Sciatic nerve (tissue), 2 donors: ENCODE measurements at regions of chr4 and their contacts with region 1.

Region 1: DNA sequence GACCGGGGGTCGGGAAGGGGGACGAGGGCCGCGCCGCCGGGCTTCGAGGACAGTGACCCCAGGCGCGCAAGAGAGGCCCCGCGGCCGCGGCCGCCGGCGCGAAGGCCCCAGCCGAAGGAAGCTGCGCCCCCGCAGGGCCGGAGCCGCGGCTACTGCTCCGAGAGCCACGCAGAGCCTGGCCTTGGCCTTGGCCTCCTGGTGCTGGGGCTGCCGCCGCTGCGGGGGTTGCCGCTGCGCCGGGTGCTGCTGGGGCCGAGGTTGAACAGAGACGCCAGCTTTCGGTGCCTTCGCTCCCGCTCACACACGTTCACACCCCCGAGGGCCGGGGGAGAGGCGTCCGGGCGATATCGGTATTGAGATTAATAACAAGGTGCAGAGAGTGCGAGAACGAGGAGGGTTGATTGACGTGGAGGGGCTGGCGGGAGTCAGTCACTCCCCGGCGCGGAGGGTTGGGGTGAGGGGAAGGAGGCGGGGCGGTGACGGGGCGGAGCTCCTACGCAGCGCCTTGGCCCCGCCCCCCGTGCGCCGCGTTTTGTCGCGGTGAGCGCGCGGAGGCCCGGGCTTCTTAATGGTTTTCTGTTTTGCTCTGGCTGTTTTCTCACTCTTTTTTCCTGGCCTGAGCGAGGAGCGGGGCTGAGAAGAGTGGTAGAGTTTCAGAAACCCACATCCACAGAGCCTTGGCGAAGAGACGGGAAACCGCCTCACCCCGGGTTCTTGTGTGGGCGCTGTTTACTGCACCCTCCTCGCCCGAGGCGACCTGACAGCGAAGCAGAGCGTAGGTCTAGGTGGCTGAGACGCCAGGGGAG is 878 bp upstream of the CNOT6L start:
- DNase-seq: peak; percentile 97
- ATAC-seq: peak; percentile 97

Region 2: DNA sequence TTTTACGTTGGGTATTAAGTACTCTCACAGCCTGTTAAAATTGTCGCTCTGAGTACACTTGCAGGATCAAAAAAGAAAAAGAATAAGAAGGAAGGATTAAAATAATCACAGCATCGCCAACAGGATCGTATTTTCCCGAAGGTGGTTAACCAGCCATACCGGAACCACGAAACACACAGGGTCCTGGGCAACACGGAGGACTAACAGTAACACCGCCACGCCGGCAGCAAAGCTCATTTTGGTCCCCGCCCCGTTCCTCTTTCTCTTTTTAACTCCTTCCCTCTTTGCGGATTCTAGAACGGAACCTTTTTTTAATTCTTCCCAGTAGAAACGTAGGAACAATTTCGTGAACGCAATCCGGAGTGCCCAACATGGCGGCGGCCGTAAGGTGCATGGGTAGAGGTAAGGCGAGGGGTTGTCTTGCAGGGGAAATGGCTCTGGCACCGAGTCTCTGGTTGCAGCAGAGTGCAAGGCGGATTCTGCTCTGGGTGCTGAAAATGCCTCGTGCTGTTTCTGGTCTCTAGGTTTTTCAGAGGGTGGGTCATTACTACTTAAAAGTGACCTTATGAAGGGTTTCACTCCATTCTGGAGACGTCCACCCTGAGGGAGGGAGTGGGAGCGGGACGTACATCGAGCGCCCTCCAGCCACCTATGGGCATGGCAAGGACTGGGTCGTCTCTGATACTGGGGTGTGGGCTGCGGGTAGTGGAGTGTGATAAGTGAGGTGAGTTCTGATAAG is 42.6 kb after region 1 on chr4 and contains the start of gene MRPL1:
- intact Hi-C with region 1: loop called (anchors 5 kb)
- DNase-seq: peak; percentile 92
- ATAC-seq: peak; percentile 98
- total RNA-seq, gene MRPL1: 24.9 TPM